PC-9 (cell line): ENCODE measurements at regions of chr16 and their contacts with region 1.

Region 1: GRCh38 chr16:3282730-3283524 is at the start of gene ZNF263:
- DNase-seq: peak; percentile 93 to 97
- H3K4me3 ChIP-seq: peak within 1 kb of the TSS; percentile 63
- H3K27ac ChIP-seq: peak within 1 kb of the TSS; percentile 97
- H3K4me1 ChIP-seq: peaks cover 18% of the 10 kb centered on the region
- H3K27me3 ChIP-seq: no peaks in the 10 kb centered on the region
- CTCF ChIP-seq: no peak
- total RNA-seq, gene ZNF263: 36.8 and 49.8 TPM in 2 replicates

Region 2: DNA sequence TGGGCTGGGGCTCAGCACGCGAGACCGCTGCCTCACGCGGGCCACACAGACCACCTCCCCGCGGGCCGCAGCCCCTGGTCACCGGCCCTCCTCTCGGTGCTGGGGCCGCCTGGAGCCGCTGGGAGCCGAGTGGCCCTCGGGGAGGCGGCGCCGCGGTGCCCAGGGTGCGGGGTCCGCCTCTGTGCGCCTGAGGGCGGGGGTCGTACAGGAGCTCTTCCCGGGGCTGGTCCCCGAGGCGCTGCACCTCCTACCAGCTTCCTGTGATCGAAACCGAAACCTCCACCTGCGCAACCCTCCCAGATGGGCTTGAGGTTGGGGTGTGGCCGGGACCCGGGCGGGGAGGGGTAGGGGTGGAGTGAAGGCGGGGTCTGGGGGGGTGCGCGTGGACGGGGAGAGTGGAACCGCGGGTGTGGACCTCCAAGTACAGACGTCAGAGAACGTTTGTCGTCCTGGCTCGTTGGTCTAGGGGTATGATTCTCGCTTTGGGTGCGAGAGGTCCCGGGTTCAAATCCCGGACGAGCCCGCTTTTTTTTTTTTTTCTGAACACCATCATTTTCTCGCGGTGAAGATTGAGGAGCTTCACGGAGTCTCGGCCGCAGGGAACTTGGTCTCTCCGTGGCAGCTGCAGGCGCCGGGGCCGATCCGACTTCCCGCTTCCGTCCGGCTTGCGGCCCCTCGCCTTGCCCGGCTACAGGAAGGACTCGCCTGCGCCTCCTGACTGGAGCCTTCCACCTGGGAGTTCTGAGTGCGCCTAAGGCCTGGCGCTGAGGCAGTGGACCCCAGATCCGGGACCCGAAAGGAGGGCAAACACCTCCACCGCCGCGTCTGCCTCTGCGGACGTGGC is 124.2 kb before region 1 on chr16:
- CTCF ChIA-PET with region 1: no interaction called
- POLR2A ChIA-PET with region 1: interaction called, 26 read pairs
- intact Hi-C with region 1: loop called (anchors 1 kb)
- DNase-seq: peak; percentile 82 to 95
- H3K4me3 ChIP-seq: peak overlapping the region; percentile 71
- H3K27ac ChIP-seq: peak overlapping the region; percentile 98
- H3K4me1 ChIP-seq: no peaks in the 10 kb centered on the region
- H3K27me3 ChIP-seq: no peaks in the 10 kb centered on the region
- CTCF ChIP-seq: no peak

Region 3: GRCh38 chr16:3234543-3235541 is 48.1 kb before region 1 on chr16 and contains the start of gene ZNF200:
- CTCF ChIA-PET with region 1: no interaction called
- POLR2A ChIA-PET with region 1: no interaction called
- intact Hi-C with region 1: loop called (anchors 2 kb)
- DNase-seq: peak; percentile 87 to 95
- H3K4me3 ChIP-seq: peak within 1 kb of the TSS; percentile 88
- H3K27ac ChIP-seq: peak within 1 kb of the TSS; percentile 55
- H3K4me1 ChIP-seq: peaks cover 7% of the 10 kb centered on the region; the same call in 1 of the 2 replicates
- H3K27me3 ChIP-seq: no peaks in the 10 kb centered on the region
- CTCF ChIP-seq: no peak
- total RNA-seq, gene ZNF200: 12.1 and 13.2 TPM in 2 replicates

Region 4: GRCh38 chr16:3400779-3401688 is 118.1 kb after region 1 on chr16 and contains the starts of genes ZNF174 and ZSCAN32:
- CTCF ChIA-PET with region 1: no interaction called
- POLR2A ChIA-PET with region 1: no interaction called
- intact Hi-C with region 1: loop called (anchors 2 kb)
- DNase-seq: peak; percentile 98 to 100
- H3K4me3 ChIP-seq: peak within 1 kb of the TSS; percentile 74
- H3K27ac ChIP-seq: peak within 1 kb of the TSS; percentile 40; the same call in 1 of the 2 replicates
- H3K4me1 ChIP-seq: peaks cover 12% of the 10 kb centered on the region; the same call in 1 of the 2 replicates
- H3K27me3 ChIP-seq: no peaks in the 10 kb centered on the region
- CTCF ChIP-seq: no peak
- total RNA-seq, gene ZNF174: 12.1 and 13.2 TPM in 2 replicates
- total RNA-seq, gene ZSCAN32: 15.5 and 16.4 TPM in 2 replicates

Region 5: DNA sequence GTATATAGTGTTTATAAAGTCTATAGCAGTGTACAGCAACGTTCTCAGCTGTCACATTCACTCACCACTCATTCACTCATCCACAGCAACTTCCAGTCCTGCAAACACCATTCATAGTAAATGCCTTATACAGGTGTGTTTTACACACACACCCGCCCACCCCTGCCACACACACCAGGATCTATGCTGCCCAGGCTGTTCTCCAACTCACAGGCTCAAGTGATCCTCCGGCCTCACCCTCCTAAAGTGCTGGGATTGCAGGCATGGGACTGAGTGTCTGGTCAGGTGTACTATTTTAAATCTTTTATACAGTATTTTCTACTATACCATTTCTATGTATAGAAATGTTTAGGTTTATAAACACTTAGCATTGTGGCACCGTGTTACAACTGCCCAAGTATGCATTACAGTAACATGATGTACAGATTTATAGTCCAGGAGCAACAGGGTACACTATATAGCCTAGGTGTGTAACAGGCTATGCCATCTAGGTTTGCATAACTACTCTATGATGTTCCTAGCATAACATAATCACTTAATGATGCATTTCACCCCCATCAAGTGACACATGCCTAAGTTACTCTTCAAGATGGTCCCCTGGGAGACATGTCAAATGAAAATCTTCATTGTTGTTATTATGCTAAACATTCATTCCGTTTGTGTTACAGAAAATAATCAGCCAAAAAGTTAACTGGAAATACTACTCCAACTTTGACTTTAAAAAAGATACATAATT is 555.1 kb after region 1 on chr16:
- CTCF ChIA-PET with region 1: no interaction called
- POLR2A ChIA-PET with region 1: interaction called, 12 read pairs
- intact Hi-C with region 1: no loop called
- DNase-seq: no peak
- H3K4me3 ChIP-seq: no peak overlapping the region
- H3K27ac ChIP-seq: no peak overlapping the region
- H3K4me1 ChIP-seq: no peaks in the 10 kb centered on the region
- H3K27me3 ChIP-seq: no peaks in the 10 kb centered on the region
- CTCF ChIP-seq: no peak